Caco-2 (cell line): ENCODE measurements at regions of chr6 and their contacts with region 1.

Region 1: DNA sequence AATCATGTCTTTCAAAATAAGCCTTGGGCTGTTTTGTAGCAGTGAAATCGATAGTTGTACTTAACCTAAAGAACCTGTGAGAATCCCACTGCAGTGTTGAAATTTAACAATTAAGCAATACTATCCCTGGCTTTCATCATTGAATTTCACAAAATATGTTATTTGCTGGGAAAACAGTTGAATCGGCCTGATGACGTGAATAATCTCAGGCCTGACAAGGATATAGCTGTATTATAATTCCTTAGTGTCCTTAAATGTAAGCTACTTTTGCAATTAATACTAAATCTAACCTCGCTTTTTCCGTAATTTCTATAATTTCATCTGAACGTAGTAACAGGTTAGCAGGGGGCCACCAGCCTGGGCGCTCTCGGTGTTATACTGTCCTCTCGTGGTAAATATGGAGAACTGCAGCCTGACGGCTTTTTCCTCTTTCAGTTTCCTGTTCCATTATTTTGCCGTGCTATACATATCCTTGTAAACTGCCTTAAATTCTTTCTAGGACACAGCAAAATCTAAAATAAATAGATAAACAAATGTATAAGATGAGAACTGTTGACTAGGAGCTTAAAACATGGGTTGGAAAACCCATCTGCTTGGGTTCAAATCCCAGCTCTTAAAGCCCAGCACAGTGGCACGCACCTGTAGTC is 24.0 kb downstream of the MTFR2 start:
- DNase-seq: peak in 1 of 2 experiments; percentile 56
- H3K4me3 ChIP-seq: no peak overlapping the region
- H3K4me3 Mint-ChIP-seq: no peak overlapping the region
- H3K27ac Mint-ChIP-seq: no peak overlapping the region
- H3K4me1 ChIP-seq: peaks cover 18% of the 10 kb centered on the region
- H3K4me1 Mint-ChIP-seq: peaks cover 16% of the 10 kb centered on the region
- H3K27me3 ChIP-seq: no peaks in the 10 kb centered on the region
- H3K27me3 Mint-ChIP-seq: peaks cover 5% of the 10 kb centered on the region
- CTCF ChIP-seq: peak; percentile 99

Region 2: GRCh38 chr6:135451693-135452092 is 774.5 kb before region 1 on chr6:
- CTCF ChIA-PET with region 1: no interaction called
- POLR2A ChIA-PET with region 1: no interaction called
- intact Hi-C with region 1: loop called (anchors 1 kb)
- DNase-seq: peak in 1 of 2 experiments; percentile 36
- H3K4me3 ChIP-seq: no peak overlapping the region
- H3K4me3 Mint-ChIP-seq: no peak overlapping the region
- H3K27ac Mint-ChIP-seq: no peak overlapping the region
- H3K4me1 ChIP-seq: no peaks in the 10 kb centered on the region
- H3K4me1 Mint-ChIP-seq: no peaks in the 10 kb centered on the region
- H3K27me3 ChIP-seq: no peaks in the 10 kb centered on the region
- H3K27me3 Mint-ChIP-seq: no peaks in the 10 kb centered on the region
- CTCF ChIP-seq: peak; percentile 40 to 59

Region 3: GRCh38 chr6:135506270-135506997 is 719.7 kb before region 1 on chr6:
- CTCF ChIA-PET with region 1: no interaction called
- POLR2A ChIA-PET with region 1: no interaction called
- intact Hi-C with region 1: loop called (anchors 1 kb)
- DNase-seq: peak in 1 of 2 experiments; percentile 35
- H3K4me3 ChIP-seq: no peak overlapping the region
- H3K4me3 Mint-ChIP-seq: peak overlapping the region; percentile 9
- H3K27ac Mint-ChIP-seq: peak overlapping the region; percentile 65
- H3K4me1 ChIP-seq: peaks cover 24% of the 10 kb centered on the region
- H3K4me1 Mint-ChIP-seq: peaks cover 18% of the 10 kb centered on the region
- H3K27me3 ChIP-seq: no peaks in the 10 kb centered on the region
- H3K27me3 Mint-ChIP-seq: no peaks in the 10 kb centered on the region
- CTCF ChIP-seq: peak; percentile 19 to 57

Region 4: GRCh38 chr6:135535989-135536414 is 690.1 kb before region 1 on chr6:
- CTCF ChIA-PET with region 1: interaction called, 3 read pairs
- POLR2A ChIA-PET with region 1: no interaction called
- intact Hi-C with region 1: loop called (anchors 2 kb)
- DNase-seq: peak in 1 of 2 experiments; percentile 22
- H3K4me3 ChIP-seq: no peak overlapping the region
- H3K4me3 Mint-ChIP-seq: no peak overlapping the region
- H3K27ac Mint-ChIP-seq: no peak overlapping the region
- H3K4me1 ChIP-seq: no peaks in the 10 kb centered on the region
- H3K4me1 Mint-ChIP-seq: no peaks in the 10 kb centered on the region
- H3K27me3 ChIP-seq: no peaks in the 10 kb centered on the region
- H3K27me3 Mint-ChIP-seq: peaks cover 6% of the 10 kb centered on the region
- CTCF ChIP-seq: peak; percentile 57 to 62

Region 5: DNA sequence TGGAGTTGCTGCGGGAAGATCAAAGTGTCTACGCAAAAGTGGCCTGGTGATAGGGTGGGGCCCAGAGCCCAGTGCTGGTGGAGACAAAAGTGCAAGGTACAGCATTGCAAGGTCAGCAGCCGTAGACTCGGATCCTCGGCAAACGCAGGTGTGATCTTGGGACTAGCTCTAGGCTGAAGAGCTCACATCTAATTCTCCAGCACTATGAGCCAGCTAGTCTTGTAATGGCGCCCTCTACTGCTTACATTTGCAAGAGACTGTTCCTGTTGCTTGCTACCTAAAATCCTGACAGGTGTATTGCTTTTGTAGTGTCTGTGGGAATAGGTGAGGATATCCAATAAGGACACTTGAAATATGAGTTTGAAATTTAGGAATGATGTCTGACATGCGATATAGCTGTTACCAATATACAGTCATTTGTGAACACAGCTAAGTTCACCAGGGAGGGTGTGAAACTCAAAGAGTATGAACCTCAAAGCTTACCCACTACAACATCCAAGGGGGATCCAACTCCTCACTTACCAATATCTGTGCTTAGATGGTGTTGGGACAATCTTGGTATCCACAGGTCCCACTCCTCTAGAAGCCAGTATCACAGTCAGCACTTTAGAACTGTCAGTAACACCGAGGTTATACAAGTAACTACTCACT is 316.3 kb before region 1 on chr6:
- CTCF ChIA-PET with region 1: interaction called, 6 read pairs
- POLR2A ChIA-PET with region 1: no interaction called
- intact Hi-C with region 1: loop called (anchors 10 kb)
- DNase-seq: peak; percentile 62 to 63
- H3K4me3 ChIP-seq: no peak overlapping the region
- H3K4me3 Mint-ChIP-seq: no peak overlapping the region
- H3K27ac Mint-ChIP-seq: no peak overlapping the region
- H3K4me1 ChIP-seq: no peaks in the 10 kb centered on the region
- H3K4me1 Mint-ChIP-seq: peaks cover 9% of the 10 kb centered on the region
- H3K27me3 ChIP-seq: no peaks in the 10 kb centered on the region
- H3K27me3 Mint-ChIP-seq: peaks cover 3% of the 10 kb centered on the region
- CTCF ChIP-seq: peak; percentile 28 to 59

Region 6: DNA sequence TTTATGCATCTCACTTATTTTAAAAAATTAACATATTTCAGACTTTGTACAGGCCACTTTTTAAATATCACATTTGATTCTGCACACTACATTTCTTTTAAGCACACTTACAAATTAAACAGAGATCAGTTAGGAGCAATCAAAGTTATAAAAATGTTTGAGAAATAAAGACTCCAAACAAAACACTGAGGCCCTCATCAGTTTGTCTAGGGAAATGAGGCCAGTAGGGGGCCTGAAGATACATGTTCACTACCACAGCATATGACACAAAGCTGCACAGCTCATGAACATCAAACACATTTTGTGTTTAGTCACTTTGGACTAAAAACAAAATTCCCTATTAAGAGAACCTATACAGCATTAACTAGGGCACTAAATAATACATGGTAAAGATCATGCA is 194.2 kb before region 1 on chr6:
- CTCF ChIA-PET with region 1: interaction called, 5 read pairs
- POLR2A ChIA-PET with region 1: no interaction called
- intact Hi-C with region 1: loop called (anchors 1 kb)
- DNase-seq: peak in 1 of 2 experiments; percentile 9
- H3K4me3 ChIP-seq: no peak overlapping the region
- H3K4me3 Mint-ChIP-seq: no peak overlapping the region
- H3K27ac Mint-ChIP-seq: no peak overlapping the region
- H3K4me1 ChIP-seq: 0 out of 2 replicates have a peak, but pooled peaks cover 7% of the 10 kb centered on the region
- H3K4me1 Mint-ChIP-seq: peaks cover 6% of the 10 kb centered on the region
- H3K27me3 ChIP-seq: no peaks in the 10 kb centered on the region
- H3K27me3 Mint-ChIP-seq: no peaks in the 10 kb centered on the region
- CTCF ChIP-seq: peak; percentile 31 to 44

Region 7: GRCh38 chr6:136446579-136447182 is 220.5 kb after region 1 on chr6:
- CTCF ChIA-PET with region 1: no interaction called
- POLR2A ChIA-PET with region 1: no interaction called
- intact Hi-C with region 1: no loop called
- DNase-seq: no peak
- H3K4me3 ChIP-seq: no peak overlapping the region
- H3K4me3 Mint-ChIP-seq: no peak overlapping the region
- H3K27ac Mint-ChIP-seq: no peak overlapping the region
- H3K4me1 ChIP-seq: peaks cover 33% of the 10 kb centered on the region
- H3K4me1 Mint-ChIP-seq: peaks cover 26% of the 10 kb centered on the region
- H3K27me3 ChIP-seq: no peaks in the 10 kb centered on the region
- H3K27me3 Mint-ChIP-seq: no peaks in the 10 kb centered on the region
- CTCF ChIP-seq: no peak